CD8-positive, alpha-beta T cell (primary cell): ENCODE measurements at regions of chr13 and their contacts with region 1.

Region 1: DNA sequence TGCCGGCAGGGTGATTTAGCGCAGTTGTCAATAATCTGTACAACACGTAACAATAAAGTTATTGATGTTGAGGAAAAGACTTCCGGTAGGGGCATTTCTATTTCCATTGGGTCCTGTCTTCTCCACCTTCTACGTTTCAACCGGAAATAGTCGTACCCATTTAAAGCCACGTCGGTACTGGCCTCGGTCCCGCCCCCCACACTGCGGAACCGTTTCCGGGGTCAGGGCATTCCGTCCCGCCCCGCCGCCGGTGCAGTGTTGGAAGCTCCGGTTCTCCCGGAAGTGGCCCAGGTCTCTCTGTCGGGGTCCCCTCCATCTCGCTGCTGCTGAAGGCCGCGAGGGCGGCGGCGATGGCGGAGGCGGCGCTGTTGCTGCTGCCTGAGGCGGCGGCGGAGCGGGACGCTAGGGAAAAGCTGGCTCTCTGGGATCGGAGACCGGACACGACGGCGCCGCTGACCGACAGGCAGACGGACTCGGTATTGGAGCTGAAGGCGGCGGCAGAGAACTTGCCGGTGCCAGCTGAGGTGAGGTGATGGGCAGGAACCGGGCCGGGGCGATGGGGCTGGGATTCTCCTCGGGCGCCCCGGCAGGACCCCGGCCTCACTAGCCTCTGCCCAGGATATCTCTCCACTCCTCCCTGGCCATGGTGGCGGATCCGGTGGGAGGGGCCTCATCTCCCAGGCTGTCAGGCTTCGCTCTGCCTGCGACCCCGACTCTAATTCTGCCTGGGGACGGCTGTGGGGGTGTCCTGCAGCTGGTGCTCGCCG is at the start of gene COG3:
- DNase-seq: peak; percentile 86 to 98 (median 94)
- ATAC-seq: peak; percentile 94
- H3K4me3 ChIP-seq: peak within 1 kb of the TSS; percentile 77 to 85
- H3K4me3 Mint-ChIP-seq: peak within 1 kb of the TSS; percentile 92
- H3K27ac ChIP-seq: peak within 1 kb of the TSS; percentile 82 to 95
- H3K27ac Mint-ChIP-seq: peak within 1 kb of the TSS; percentile 91
- H3K4me1 ChIP-seq: peaks cover 38% of the 10 kb centered on the region
- H3K4me1 Mint-ChIP-seq: peaks cover 49% of the 10 kb centered on the region
- H3K27me3 ChIP-seq: no peaks in the 10 kb centered on the region
- H3K27me3 Mint-ChIP-seq: no peaks in the 10 kb centered on the region
- CTCF ChIP-seq: peak; percentile 6
- total RNA-seq, gene COG3: 45.9 to 47.6 TPM

Region 2: GRCh38 chr13:44988973-44989817 is 475.7 kb before region 1 on chr13 and contains the starts of genes GPALPP1 and NUFIP1:
- CTCF ChIA-PET with region 1: no interaction called
- POLR2A ChIA-PET with region 1: no interaction called
- intact Hi-C with region 1: loop called (anchors 1 kb)
- DNase-seq: peak; percentile 79 to 96 (median 93)
- ATAC-seq: peak; percentile 94
- H3K4me3 ChIP-seq: peak within 1 kb of the TSS; percentile 88 to 92
- H3K4me3 Mint-ChIP-seq: peak within 1 kb of the TSS; percentile 100
- H3K27ac ChIP-seq: peak within 1 kb of the TSS; percentile 86 to 90
- H3K27ac Mint-ChIP-seq: peak within 1 kb of the TSS; percentile 99
- H3K4me1 ChIP-seq: peaks cover 20% of the 10 kb centered on the region
- H3K4me1 Mint-ChIP-seq: peaks cover 64% of the 10 kb centered on the region
- H3K27me3 ChIP-seq: no peaks in the 10 kb centered on the region
- H3K27me3 Mint-ChIP-seq: no peaks in the 10 kb centered on the region
- CTCF ChIP-seq: no peak
- total RNA-seq, gene GPALPP1: 16.7 to 17.8 TPM
- total RNA-seq, gene NUFIP1: 5.2 to 6.1 TPM

Region 3: GRCh38 chr13:45179428-45179827 is 285.4 kb before region 1 on chr13:
- CTCF ChIA-PET with region 1: no interaction called
- POLR2A ChIA-PET with region 1: no interaction called
- intact Hi-C with region 1: no loop called
- DNase-seq: no peak
- ATAC-seq: no peak
- H3K4me3 ChIP-seq: no peak overlapping the region
- H3K4me3 Mint-ChIP-seq: no peak overlapping the region
- H3K27ac ChIP-seq: no peak overlapping the region
- H3K27ac Mint-ChIP-seq: no peak overlapping the region
- H3K4me1 ChIP-seq: no peaks in the 10 kb centered on the region
- H3K4me1 Mint-ChIP-seq: peaks cover 37% of the 10 kb centered on the region
- H3K27me3 ChIP-seq: no peaks in the 10 kb centered on the region
- H3K27me3 Mint-ChIP-seq: no peaks in the 10 kb centered on the region
- CTCF ChIP-seq: no peak

Region 4: DNA sequence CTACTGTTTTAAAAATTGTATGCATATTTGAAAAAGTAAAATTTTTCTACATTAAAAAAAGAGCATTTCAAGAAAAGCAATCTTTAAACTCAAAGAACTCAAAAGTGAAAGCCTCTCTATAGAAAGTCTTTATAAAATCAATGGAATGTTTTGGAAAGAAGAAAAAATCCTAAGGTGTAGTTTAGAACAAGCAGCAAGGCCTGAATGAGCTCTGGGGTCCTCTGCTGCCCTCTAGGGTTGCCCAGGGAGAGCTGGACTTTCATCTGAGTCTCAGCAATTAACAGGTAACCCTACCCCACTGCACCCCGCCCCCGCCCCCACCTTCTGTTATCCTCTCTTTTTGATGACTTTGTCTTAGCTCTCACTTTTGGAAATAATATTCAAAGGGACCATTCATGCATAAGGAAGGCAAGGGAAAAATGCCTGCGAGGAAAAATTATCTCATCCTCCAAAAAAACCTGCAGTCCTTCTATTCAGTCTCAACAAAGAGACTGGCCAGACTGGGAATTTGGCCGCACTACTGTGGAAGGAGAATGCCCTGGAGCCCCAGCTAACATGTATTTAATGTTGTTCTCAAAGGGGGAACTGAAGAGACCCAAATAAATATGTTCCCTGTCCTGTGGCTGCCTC is 70.8 kb before region 1 on chr13:
- CTCF ChIA-PET with region 1: no interaction called
- POLR2A ChIA-PET with region 1: interaction called, 5 read pairs
- intact Hi-C with region 1: loop called in 1 of 2 experiments (anchors 5 kb)
- DNase-seq: peak in 4 of 9 experiments; percentile 31 to 69 (median 48)
- ATAC-seq: no peak
- H3K4me3 ChIP-seq: no peak overlapping the region
- H3K4me3 Mint-ChIP-seq: no peak overlapping the region
- H3K27ac ChIP-seq: no peak overlapping the region
- H3K27ac Mint-ChIP-seq: no peak overlapping the region
- H3K4me1 ChIP-seq: peaks cover 43% of the 10 kb centered on the region
- H3K4me1 Mint-ChIP-seq: peaks cover 46% of the 10 kb centered on the region
- H3K27me3 ChIP-seq: no peaks in the 10 kb centered on the region
- H3K27me3 Mint-ChIP-seq: no peaks in the 10 kb centered on the region
- CTCF ChIP-seq: peak; percentile 38

Region 5: GRCh38 chr13:46914341-46914740 is 1449.5 kb after region 1 on chr13:
- CTCF ChIA-PET with region 1: no interaction called
- POLR2A ChIA-PET with region 1: no interaction called
- intact Hi-C with region 1: no loop called
- DNase-seq: no peak
- ATAC-seq: no peak
- H3K4me3 ChIP-seq: no peak overlapping the region
- H3K4me3 Mint-ChIP-seq: no peak overlapping the region
- H3K27ac ChIP-seq: no peak overlapping the region
- H3K27ac Mint-ChIP-seq: no peak overlapping the region
- H3K4me1 ChIP-seq: no peaks in the 10 kb centered on the region
- H3K4me1 Mint-ChIP-seq: no peaks in the 10 kb centered on the region
- H3K27me3 ChIP-seq: peaks cover 0 to 3% of the 10 kb centered on the region in 2 experiments
- H3K27me3 Mint-ChIP-seq: peaks cover 5% of the 10 kb centered on the region
- CTCF ChIP-seq: no peak